Ovary (tissue), 10 donors: ENCODE measurements at regions of chr19 and their contacts with region 1.

Region 1: GRCh38 chr19:18588611-18589379 is at the start of gene REX1BD:
- DNase-seq: peak; percentile 81 to 90 (median 88)
- H3K4me3 ChIP-seq: peak within 1 kb of the TSS; percentile 68
- H3K27ac ChIP-seq: peak within 1 kb of the TSS; percentile 1 to 72
- H3K4me1 ChIP-seq: peaks cover 19% of the 10 kb centered on the region
- H3K27me3 ChIP-seq: no peaks in the 10 kb centered on the region
- CTCF ChIP-seq: peak; percentile 86 to 91 (median 87)
- EP300 ChIP-seq: no peak
- POLR2A ChIP-seq: peak; percentile 45
- total RNA-seq, gene REX1BD: 46.5 to 146 (median 66.7) TPM

Region 2: DNA sequence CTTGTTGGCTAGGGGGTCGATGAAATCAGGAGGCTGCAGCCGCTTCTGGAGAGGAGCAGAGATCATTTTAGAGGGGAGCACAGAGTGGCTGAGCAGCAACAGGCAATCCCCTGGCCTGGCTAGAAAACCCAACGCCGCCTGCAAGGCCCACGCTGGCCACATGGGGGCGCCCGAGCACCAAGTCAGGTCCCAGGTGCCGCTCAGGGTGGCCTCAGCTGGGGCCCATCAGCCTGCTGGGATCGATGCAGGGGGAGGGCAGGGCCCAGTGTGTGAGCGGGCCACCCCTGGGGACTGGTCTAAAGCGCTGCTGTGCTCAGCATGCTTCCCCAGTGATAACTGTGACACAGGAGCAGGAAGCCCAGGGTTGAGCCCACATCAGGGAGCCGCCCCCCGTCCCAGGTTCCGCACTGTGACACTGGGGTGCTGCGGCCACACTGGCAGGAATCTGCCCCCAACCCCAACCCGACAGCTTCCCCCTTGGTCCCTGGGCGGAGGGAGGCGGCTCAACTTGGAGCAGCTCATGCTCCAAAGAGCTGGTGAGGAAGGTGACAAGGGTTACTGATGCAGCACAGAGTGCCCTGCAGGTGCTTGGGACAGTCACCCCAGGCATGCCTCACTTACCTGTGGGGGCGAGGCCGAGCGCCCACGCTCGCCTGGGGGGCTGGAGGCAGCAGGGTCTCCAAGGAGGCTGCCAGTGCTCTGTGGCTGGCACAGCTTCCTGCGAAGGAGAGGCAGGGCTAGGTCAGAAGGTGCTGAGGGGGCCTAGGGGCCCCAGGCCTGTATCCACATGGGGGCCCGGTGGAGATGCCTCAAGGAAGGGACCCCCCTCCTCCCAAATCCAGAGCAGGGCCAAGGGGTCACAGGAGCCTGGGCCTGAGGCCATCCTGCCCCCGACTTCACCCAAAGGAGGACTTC is 137.6 kb before region 1 on chr19:
- intact Hi-C with region 1: loop called in 1 of 4 experiments (anchors 5 kb)
- DNase-seq: peak; percentile 84 to 94 (median 92)
- H3K4me3 ChIP-seq: no peak overlapping the region
- H3K27ac ChIP-seq: no peak overlapping the region
- H3K4me1 ChIP-seq: peaks cover 2% of the 10 kb centered on the region
- H3K27me3 ChIP-seq: no peaks in the 10 kb centered on the region
- CTCF ChIP-seq: peak; percentile 95 to 98 (median 98)
- EP300 ChIP-seq: no peak
- POLR2A ChIP-seq: no peak

Region 3: DNA sequence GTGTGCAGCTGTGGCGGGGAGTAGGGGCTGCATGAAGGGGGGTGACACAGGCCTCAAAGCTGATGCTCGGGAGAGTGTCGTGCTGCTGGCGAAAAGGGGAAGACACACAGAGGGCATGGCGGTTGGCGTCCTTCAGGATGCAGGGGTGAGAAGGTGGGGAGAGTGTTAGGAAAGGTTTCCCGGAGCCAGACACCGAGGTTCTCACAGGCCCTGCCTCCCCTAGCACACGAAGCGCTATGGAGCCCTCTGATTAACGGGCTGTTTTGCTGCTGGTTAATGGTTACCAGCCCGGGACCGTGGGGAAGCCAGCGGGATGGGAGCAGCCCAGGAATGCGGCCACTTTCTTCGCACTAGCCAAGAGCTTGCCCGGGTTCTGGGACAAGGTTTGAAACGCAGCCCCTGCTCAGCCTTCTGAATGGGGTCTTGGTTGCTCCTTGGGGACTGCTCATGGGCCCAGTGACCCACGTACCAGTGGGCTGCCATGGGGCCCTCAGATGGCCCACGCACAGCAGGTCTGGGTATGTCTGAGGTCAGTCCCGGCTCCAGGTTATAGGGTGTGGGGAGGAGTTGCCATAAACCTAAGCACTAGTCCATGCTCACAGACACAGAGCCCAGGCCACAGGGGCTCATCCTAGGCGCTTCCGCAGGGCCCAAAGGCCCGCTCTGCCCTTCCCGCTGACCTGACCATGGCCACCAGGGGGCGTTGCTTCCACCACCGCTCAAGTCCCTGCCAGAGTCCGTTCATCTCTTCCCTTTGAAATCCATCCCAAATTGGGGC is 119.5 kb before region 1 on chr19:
- intact Hi-C with region 1: loop called in 1 of 4 experiments (anchors 5 kb)
- DNase-seq: peak; percentile 52 to 79 (median 70)
- H3K4me3 ChIP-seq: no peak overlapping the region
- H3K27ac ChIP-seq: no peak overlapping the region
- H3K4me1 ChIP-seq: peaks cover 43% of the 10 kb centered on the region
- H3K27me3 ChIP-seq: no peaks in the 10 kb centered on the region
- CTCF ChIP-seq: peak; percentile 35 to 59 (median 50)
- EP300 ChIP-seq: no peak
- POLR2A ChIP-seq: no peak

Region 4: GRCh38 chr19:18675779-18676178 is 87.0 kb after region 1 on chr19:
- intact Hi-C with region 1: loop called in 1 of 4 experiments (anchors 10 kb)
- DNase-seq: no peak
- H3K4me3 ChIP-seq: no peak overlapping the region
- H3K27ac ChIP-seq: no peak overlapping the region
- H3K4me1 ChIP-seq: peaks cover 5% of the 10 kb centered on the region
- H3K27me3 ChIP-seq: no peaks in the 10 kb centered on the region
- CTCF ChIP-seq: no peak
- EP300 ChIP-seq: no peak
- POLR2A ChIP-seq: no peak

Region 5: DNA sequence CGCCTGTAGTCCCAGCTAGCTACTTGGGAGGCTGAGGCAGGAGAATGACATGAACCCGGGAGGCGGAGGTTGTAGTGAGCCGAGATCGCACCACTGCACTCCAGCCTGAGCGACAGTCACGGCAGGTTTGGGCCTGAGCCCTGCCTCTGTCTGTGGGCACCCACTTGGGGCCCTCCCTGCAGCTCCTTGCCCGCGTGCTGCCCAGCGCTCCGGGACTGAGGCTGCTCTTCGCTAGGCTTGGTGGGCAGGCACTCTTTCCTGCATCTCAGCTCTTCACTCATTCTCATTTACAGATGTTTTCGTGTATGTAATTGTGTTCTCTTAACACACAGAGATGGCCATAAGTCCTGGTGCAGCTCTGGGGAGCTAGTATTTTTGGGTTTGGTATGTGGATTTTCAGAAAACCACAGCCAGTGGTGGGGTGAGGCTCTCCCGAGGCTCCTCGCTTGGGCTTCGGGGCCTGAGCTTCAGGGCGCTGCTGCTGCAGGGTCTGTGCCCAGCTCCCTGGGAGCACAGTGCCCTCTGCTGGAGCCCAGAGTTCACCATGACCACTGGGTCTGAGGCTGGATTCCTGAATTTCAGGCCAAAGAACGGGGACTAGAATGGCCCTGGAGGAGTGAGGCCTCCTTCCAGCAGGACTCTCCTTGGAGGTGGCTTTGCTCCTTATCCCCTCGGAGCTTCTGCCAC is 258.2 kb after region 1 on chr19:
- intact Hi-C with region 1: loop called in 2 of 4 experiments (anchors 5 to 10 kb)
- DNase-seq: peak; percentile 78 to 88 (median 84)
- H3K4me3 ChIP-seq: no peak overlapping the region
- H3K27ac ChIP-seq: peak overlapping the region in 1 of 2 donors; percentile 13
- H3K4me1 ChIP-seq: peaks cover 48% of the 10 kb centered on the region
- H3K27me3 ChIP-seq: no peaks in the 10 kb centered on the region
- CTCF ChIP-seq: peak; percentile 76 to 81 (median 80)
- EP300 ChIP-seq: no peak
- POLR2A ChIP-seq: no peak

Region 6: GRCh38 chr19:18856385-18857126 is 267.8 kb after region 1 on chr19:
- intact Hi-C with region 1: loop called in 1 of 4 experiments (anchors 10 kb)
- DNase-seq: no peak
- H3K4me3 ChIP-seq: no peak overlapping the region
- H3K27ac ChIP-seq: no peak overlapping the region
- H3K4me1 ChIP-seq: no peaks in the 10 kb centered on the region
- H3K27me3 ChIP-seq: no peaks in the 10 kb centered on the region
- CTCF ChIP-seq: no peak
- EP300 ChIP-seq: no peak
- POLR2A ChIP-seq: no peak